CD4-positive, alpha-beta T cell (primary cell): ENCODE measurements at regions of chr17 and their contacts with region 1.

Region 1: DNA sequence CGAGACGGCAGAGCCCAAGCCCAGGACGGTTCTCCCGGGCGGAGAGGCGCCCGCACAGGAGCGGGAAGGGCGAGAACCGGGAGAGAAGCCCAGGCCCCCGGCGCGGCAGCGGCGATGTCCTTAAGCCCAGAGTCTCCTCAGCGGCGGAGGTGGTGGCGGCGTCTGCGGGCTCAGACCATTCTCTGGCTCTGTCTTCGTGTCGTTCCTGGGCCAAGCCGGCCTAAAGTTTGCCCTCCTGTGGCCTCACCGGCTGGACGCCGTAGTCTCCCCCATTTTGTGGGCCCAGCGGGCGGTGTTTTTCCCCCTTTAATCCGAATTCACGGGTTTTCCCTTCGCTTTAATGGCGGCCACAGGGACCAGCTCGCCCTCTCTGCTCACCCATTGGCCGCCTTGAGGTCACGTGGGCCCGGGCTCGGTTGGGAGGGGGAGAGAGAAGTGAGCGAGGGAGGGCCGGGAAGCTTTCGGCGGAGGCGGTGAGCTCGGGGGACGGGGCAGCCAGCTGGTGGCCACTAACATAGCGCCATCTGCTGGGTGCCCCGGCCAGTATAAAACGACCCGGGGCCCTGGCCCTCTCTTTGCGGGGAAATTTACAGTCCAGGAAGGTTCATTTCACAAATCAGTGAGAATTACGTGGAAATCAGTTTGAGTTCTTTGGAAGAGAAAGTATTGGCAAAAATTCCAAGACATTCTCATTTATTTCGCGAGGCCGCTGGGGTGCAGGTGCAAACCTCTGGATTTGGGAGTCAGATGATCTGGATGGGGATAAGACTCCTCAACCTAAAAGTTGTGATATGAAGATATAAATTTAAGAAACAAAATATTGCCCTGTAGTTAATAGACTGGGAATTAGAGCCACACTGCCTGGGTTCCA is 755 bp upstream of the MED13 start:
- DNase-seq: peak; percentile 95 to 99 (median 98)
- ATAC-seq: peak; percentile 95
- H3K4me3 ChIP-seq: peak overlapping the region; percentile 100
- H3K4me3 Mint-ChIP-seq: peak overlapping the region; percentile 100
- H3K27ac ChIP-seq: peak overlapping the region; percentile 99
- H3K27ac Mint-ChIP-seq: peak overlapping the region; percentile 97
- H3K4me1 ChIP-seq: peaks cover 9% of the 10 kb centered on the region
- H3K4me1 Mint-ChIP-seq: peaks cover 39% of the 10 kb centered on the region
- H3K27me3 ChIP-seq: no peaks in the 10 kb centered on the region
- H3K27me3 Mint-ChIP-seq: no peaks in the 10 kb centered on the region
- CTCF ChIP-seq: peak; percentile 91

Region 2: DNA sequence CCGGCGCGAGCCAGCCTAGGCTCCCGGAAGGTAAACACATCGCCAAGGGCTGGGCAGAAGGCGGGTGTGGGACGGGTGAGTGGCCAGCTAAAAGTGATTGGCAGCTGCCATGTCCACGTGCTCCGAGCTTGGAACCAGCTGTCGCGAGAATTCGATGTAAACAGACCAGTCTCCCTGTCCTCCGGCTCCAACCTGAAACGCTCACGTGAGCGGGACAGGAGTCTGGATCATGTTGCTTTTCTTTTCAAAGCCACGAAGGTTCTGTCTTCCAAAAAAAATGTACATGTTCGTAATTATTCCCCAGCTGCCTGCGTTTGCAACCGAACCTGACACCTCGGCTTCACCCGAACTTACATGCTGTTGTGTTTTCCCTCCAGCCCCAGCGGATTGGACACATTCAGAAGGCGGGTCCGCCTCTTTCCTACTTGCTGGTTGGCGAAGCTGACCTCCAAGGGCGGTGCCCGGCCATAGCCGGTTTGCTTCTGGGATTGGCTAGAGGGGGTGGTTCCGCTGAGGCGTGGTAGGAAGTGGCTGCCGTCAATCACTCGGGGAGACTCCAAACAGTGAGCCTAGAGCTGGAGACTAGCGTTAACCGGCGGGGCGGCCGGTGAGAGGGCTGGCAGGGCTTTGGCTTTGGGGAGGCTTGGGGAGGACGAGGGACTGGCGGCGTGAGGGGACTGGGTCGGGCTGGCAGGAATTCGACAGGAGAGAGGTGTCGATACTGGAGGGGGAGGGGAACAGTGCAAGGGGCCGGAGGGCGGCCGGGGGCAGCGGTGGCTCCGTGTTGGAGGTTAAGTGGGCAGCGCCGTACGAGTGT is 1388.3 kb before region 1 on chr17 and contains the start of gene BCAS3:
- CTCF ChIA-PET with region 1: no interaction called
- POLR2A ChIA-PET with region 1: interaction called, 8 read pairs
- intact Hi-C with region 1: loop called in 1 of 2 experiments (anchors 5 kb)
- DNase-seq: peak; percentile 92 to 98 (median 94)
- ATAC-seq: peak; percentile 96
- H3K4me3 ChIP-seq: peak within 1 kb of the TSS; percentile 66
- H3K4me3 Mint-ChIP-seq: peak within 1 kb of the TSS; percentile 97
- H3K27ac ChIP-seq: peak within 1 kb of the TSS; percentile 60 to 76
- H3K27ac Mint-ChIP-seq: peak within 1 kb of the TSS; percentile 93
- H3K4me1 ChIP-seq: peaks cover 13% of the 10 kb centered on the region
- H3K4me1 Mint-ChIP-seq: peaks cover 25% of the 10 kb centered on the region
- H3K27me3 ChIP-seq: no peaks in the 10 kb centered on the region
- H3K27me3 Mint-ChIP-seq: no peaks in the 10 kb centered on the region
- CTCF ChIP-seq: no peak
- total RNA-seq, gene BCAS3: 20.1 to 31.8 TPM

Region 3: DNA sequence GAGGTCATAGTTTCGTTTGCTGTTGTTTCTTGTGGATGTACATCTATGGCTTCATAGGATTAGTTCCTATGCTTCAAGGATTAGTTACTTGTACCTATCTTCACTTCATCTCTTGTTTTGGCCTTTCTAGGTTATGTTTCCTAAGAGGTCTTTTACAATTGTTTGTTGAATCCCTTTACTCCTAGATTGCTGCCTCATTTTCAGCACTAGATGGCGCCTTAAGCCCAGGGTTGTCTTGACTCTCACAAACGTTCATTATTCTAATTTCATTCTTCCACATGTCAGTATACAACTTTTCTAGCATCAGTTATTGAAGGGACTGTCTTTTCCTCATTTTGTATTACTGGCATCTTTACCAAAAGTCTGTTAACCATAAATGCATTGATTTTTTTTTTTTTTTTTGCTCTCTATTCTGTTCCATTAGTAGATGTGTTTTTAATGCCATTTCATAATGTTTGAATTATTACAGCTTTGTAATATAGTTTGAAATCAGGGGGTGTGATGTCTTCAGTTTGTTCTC is 429.9 kb before region 1 on chr17:
- CTCF ChIA-PET with region 1: no interaction called
- POLR2A ChIA-PET with region 1: interaction called, 3 read pairs
- intact Hi-C with region 1: loop called (anchors 2 to 5 kb)
- DNase-seq: peak in 13 of 14 experiments; percentile 6 to 72 (median 30)
- ATAC-seq: no peak
- H3K4me3 ChIP-seq: no peak overlapping the region
- H3K4me3 Mint-ChIP-seq: no peak overlapping the region
- H3K27ac ChIP-seq: no peak overlapping the region
- H3K27ac Mint-ChIP-seq: no peak overlapping the region
- H3K4me1 ChIP-seq: no peaks in the 10 kb centered on the region
- H3K4me1 Mint-ChIP-seq: no peaks in the 10 kb centered on the region
- H3K27me3 ChIP-seq: peaks cover 0 to 18% of the 10 kb centered on the region in 2 experiments
- H3K27me3 Mint-ChIP-seq: peaks cover 62% of the 10 kb centered on the region
- CTCF ChIP-seq: peak; percentile 46

Region 4: DNA sequence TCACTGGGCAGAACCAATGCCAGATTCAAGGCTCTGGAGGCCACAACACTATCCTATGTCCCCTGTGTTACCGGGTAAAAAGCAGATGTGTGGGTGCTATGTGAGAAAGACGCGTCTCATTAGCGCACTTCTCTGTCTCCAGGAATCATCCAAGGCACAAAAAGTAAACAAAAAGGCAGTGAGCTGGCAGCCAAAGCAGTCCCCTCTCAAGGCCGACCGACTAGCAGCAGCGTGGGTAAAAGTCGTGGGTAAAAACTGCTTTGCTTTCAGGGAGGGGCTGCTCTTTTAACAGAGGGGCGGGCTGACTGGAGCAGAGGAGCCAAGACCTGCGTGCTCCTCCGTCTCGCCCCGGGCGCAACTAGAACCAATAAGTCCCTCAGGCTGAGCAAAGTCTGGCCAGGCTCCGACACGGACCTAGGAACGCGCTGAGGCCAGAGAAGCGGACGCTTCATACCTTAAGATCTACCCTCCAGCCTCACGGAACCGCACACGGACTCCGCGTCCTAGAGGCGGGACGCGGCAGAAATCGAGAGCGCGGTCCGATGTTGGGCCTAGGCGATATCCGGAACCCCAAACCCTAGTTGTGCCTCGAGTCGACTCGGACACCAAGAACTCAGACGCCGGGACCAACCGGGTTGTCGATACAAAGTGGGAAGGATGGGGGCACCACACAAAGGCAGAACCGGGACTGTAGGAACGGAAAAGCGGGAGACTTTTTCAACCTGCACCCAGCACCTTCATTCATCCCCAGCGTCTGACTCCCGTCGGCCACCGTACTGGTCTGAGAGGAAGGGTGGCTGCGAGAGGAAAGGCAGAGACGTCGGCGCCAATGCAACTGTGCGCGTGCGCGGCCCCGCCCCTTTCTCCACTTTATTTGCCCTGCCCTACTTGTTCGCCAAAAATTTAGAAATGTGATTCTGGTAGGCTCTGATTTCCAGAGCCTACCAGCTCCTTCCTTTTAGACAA is 138.3 kb before region 1 on chr17 and contains the start of gene INTS2:
- CTCF ChIA-PET with region 1: no interaction called
- POLR2A ChIA-PET with region 1: no interaction called
- intact Hi-C with region 1: loop called (anchors 2 kb)
- DNase-seq: peak; percentile 91 to 98 (median 95)
- ATAC-seq: peak; percentile 84
- H3K4me3 ChIP-seq: peak within 1 kb of the TSS; percentile 62
- H3K4me3 Mint-ChIP-seq: peak within 1 kb of the TSS; percentile 94
- H3K27ac ChIP-seq: peak within 1 kb of the TSS; percentile 68 to 78
- H3K27ac Mint-ChIP-seq: peak within 1 kb of the TSS; percentile 93
- H3K4me1 ChIP-seq: peaks cover 18% of the 10 kb centered on the region
- H3K4me1 Mint-ChIP-seq: peaks cover 27% of the 10 kb centered on the region
- H3K27me3 ChIP-seq: no peaks in the 10 kb centered on the region
- H3K27me3 Mint-ChIP-seq: peaks cover 6% of the 10 kb centered on the region
- CTCF ChIP-seq: no peak
- total RNA-seq, gene INTS2: 8.5 to 8.7 TPM

Region 5: DNA sequence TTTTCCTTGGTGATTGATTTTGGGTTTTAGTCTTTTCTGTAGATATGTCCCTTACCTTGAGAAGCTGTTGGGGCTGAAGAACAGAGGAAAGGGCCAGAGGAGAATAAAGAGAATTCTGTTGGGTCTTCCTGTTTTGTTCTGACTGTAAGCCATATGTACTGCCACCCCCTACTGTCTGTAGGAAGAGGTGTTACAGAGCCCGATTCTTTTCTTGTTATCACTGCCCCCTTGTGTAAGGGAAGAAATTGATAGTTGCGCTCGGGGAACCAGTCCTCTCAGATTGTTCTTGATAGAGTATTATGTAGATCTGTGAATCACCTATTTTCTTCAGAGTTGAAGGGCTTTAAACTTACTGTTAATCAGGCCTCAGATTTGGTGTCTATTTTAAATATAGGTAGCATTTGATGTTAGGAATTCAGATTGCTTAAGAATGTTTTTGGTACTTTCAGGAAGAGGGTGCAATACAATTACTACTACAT is 902.7 kb after region 1 on chr17:
- CTCF ChIA-PET with region 1: no interaction called
- POLR2A ChIA-PET with region 1: no interaction called
- intact Hi-C with region 1: loop called in 1 of 2 experiments (anchors 10 kb)
- DNase-seq: peak in 13 of 14 experiments; percentile 13 to 87 (median 35)
- ATAC-seq: peak; percentile 56
- H3K4me3 ChIP-seq: no peak overlapping the region
- H3K4me3 Mint-ChIP-seq: peak overlapping the region; percentile 87
- H3K27ac ChIP-seq: no peak overlapping the region
- H3K27ac Mint-ChIP-seq: peak overlapping the region; percentile 68
- H3K4me1 ChIP-seq: peaks cover 18% of the 10 kb centered on the region
- H3K4me1 Mint-ChIP-seq: peaks cover 37% of the 10 kb centered on the region
- H3K27me3 ChIP-seq: no peaks in the 10 kb centered on the region
- H3K27me3 Mint-ChIP-seq: no peaks in the 10 kb centered on the region
- CTCF ChIP-seq: peak; percentile 91